ENCODE measurements at regions of chr14 and their contacts with region 1.

Region 1: GRCh38 chr14:72516936-72517700 is 376.8 kb downstream of the DPF3 start:
- DNase-seq: peak; percentile 77
- H3K4me3 ChIP-seq: no peak overlapping the region
- H3K27ac ChIP-seq: peak overlapping the region; percentile 43
- H3K27me3 ChIP-seq: no peaks in the 10 kb centered on the region
- CTCF ChIP-seq: peak; percentile 93

Region 2: GRCh38 chr14:71932220-71932981 is 584.7 kb before region 1 on chr14 and contains the start of gene RGS6:
- CTCF ChIA-PET with region 1: no interaction called
- POLR2A ChIA-PET with region 1: no interaction called
- DNase-seq: no peak
- H3K4me3 ChIP-seq: no peak within 1 kb of the TSS
- H3K27ac ChIP-seq: no peak within 1 kb of the TSS
- H3K27me3 ChIP-seq: peaks cover 32% of the 10 kb centered on the region
- CTCF ChIP-seq: no peak
- polyA plus RNA-seq, gene RGS6: not detected in 2 replicates

Region 3: DNA sequence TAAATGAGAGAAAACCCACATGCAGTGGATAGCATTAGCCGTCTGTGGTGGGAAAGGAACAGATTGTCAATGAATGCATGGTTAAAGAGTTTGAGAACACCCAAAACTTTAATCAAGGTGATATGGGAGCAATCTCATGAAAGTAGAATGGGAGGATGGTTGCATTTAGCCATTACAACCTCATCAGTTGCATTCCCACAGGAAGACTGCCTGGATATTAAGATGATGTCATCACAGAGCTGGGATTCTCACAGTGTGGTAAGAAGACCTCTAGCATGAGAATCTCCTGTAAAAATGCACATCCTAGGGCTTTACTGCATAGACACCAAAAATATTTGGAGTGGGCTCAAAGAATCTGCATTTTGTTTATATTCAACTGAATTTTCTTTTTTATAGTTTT is 300.0 kb before region 1 on chr14:
- CTCF ChIA-PET with region 1: no interaction called
- POLR2A ChIA-PET with region 1: no interaction called
- DNase-seq: no peak
- H3K4me3 ChIP-seq: no peak overlapping the region
- H3K27ac ChIP-seq: no peak overlapping the region
- H3K27me3 ChIP-seq: no peaks in the 10 kb centered on the region
- CTCF ChIP-seq: no peak

Region 4: DNA sequence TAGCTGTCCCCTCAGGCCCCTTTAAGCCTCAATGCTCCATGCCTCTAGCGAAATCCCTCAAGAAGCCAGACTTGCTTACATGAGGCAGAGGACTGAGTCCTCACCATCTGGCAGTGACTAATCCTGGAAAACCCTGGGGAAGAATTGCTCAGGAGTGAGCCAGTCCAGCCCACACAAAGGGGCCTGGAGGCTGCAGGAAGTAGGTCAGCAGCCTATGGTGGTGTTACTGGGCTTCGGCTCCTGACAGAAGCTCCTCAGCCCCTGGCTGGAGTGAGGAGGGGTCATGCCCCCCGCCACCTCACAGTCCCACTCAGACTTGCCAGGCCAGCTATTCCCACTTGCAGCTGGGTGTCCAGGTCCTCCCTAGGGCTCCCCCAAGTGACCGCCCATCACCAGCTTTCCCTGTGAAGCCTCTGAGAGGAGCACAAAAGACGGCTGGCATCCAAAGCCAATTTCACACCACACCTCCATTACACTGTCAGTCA is 126.2 kb after region 1 on chr14:
- CTCF ChIA-PET with region 1: interaction called, 12 read pairs
- POLR2A ChIA-PET with region 1: interaction called, 4 read pairs
- DNase-seq: peak; percentile 94
- H3K4me3 ChIP-seq: no peak overlapping the region
- H3K27ac ChIP-seq: peak overlapping the region; percentile 99
- H3K27me3 ChIP-seq: no peaks in the 10 kb centered on the region
- CTCF ChIP-seq: peak; percentile 12

Region 5: GRCh38 chr14:72893636-72894321 is 376.7 kb after region 1 on chr14 and contains the start of gene DPF3:
- CTCF ChIA-PET with region 1: interaction called, 49 read pairs
- POLR2A ChIA-PET with region 1: interaction called, 3 read pairs
- DNase-seq: peak; percentile 91
- H3K4me3 ChIP-seq: peak within 1 kb of the TSS; percentile 83
- H3K27ac ChIP-seq: peak within 1 kb of the TSS; percentile 39
- H3K27me3 ChIP-seq: no peaks in the 10 kb centered on the region
- CTCF ChIP-seq: no peak
- polyA plus RNA-seq, gene DPF3: 15.8 and 18.1 TPM in 2 replicates

Region 6: DNA sequence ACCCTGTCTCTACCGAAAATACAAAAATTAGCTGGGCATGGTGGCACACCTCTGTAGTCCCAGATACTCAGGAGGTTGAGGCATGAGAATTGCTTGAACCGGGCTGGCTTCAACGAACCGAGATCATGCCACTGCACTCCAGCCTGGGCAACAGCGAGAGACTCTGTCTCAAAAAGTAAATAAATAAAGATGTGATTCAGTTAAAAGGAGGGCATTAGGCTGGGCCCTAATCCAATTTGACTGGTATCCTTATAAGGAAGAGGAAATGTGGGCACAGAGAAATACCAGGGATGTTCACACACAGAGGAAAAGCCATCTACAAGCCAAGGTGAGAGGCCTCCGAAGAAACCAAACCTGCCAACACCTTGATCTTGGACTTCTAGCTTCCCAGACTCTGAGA is 399.1 kb after region 1 on chr14:
- CTCF ChIA-PET with region 1: interaction called, 10 read pairs
- POLR2A ChIA-PET with region 1: no interaction called
- DNase-seq: no peak
- H3K4me3 ChIP-seq: no peak overlapping the region
- H3K27ac ChIP-seq: no peak overlapping the region
- H3K27me3 ChIP-seq: no peaks in the 10 kb centered on the region
- CTCF ChIP-seq: no peak

Region 7: DNA sequence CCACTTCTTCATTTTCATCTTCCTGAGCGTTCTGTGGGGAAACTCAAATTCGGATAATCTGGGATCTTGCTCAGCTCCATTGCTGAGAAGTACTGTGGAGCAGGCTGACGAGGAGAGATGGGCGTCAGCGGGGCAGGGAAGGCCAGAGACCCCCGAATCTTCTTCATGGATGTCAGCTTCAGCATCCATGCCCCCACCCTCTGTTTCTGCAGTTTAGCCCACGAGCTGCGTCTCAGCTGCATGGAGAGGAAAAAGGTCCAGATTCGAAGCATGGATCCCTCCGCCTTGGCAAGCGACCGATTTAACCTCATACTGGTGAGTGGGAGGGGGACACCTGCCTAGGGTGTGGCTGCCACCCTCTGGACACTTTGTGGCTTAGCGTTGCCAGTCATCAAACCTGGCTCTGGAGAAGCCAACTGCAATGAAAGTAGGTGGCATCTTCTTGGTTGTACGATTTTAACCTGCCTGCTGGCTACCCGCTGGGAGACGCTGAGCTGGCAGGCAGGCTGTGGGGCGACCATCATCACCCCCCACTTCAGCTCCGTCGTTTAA is 425.7 kb after region 1 on chr14:
- CTCF ChIA-PET with region 1: interaction called, 479 read pairs
- POLR2A ChIA-PET with region 1: interaction called, 3 read pairs
- DNase-seq: no peak
- H3K4me3 ChIP-seq: no peak overlapping the region
- H3K27ac ChIP-seq: no peak overlapping the region
- H3K27me3 ChIP-seq: no peaks in the 10 kb centered on the region
- CTCF ChIP-seq: no peak

Measured in AG04450 (cell line).